GM10248 (cell line): ENCODE measurements at regions of chr12 and their contacts with region 1.

Region 1: DNA sequence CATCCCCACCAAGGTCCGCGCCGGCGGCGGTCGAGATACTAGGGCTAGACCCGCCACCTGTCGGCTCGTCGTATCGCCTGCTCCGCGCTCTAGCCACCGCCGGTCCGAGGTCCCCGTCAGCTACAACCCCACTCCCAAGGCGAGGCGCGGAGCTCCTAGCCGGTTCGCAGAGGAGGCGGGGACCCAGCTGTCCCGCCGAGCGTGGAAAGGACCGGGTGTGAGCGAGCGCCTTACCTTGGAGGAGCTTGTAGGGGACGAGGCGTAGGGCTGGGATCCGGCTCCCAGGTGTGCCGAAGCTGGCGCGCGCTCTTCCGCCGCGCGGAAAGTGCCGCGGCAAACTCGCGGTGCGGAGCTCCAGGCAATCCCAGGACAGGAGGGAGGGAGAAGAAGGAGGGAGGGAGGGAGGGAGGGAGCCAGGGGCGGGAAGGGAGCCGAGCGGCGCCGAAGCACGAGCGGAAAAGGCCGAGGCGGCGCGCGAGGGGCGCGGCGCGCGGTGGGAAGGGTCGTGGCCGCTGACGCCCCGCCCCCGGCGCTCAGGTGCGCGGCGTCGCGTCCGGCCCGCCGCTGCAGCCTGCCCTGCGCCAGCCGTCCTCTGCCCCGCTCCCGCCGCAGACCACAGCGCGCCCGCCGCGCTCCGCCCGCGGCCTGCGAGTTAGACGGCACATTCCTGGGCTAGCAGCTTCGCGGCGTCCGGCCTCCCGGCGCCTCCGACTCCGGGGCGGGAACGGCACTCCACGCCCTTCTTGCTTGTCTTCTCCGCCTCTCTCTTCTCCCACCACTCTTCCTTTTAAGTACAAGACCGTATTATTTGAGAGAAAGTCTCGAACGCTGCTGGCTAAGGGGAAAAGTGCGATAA is at the start of gene PAWR:
- DNase-seq: peak; percentile 88
- CTCF ChIP-seq: peak; percentile 63

Region 2: GRCh38 chr12:79555028-79555930 is 135.6 kb before region 1 on chr12:
- CTCF ChIA-PET with region 1: interaction called, 18 read pairs
- POLR2A ChIA-PET with region 1: no interaction called
- DNase-seq: no peak
- CTCF ChIP-seq: peak; percentile 77

Region 3: GRCh38 chr12:79634957-79635471 is 55.9 kb before region 1 on chr12:
- CTCF ChIA-PET with region 1: no interaction called
- POLR2A ChIA-PET with region 1: no interaction called
- DNase-seq: no peak
- CTCF ChIP-seq: no peak

Region 4: GRCh38 chr12:79766705-79767464 is 76.0 kb after region 1 on chr12:
- CTCF ChIA-PET with region 1: no interaction called
- POLR2A ChIA-PET with region 1: no interaction called
- DNase-seq: no peak
- CTCF ChIP-seq: no peak

Region 5: GRCh38 chr12:79818856-79819255 is 128.0 kb after region 1 on chr12:
- CTCF ChIA-PET with region 1: no interaction called
- POLR2A ChIA-PET with region 1: no interaction called
- DNase-seq: no peak
- CTCF ChIP-seq: no peak